A549 (cell line): ENCODE measurements at regions of chr20 and their contacts with region 1.

Region 1: GRCh38 chr20:49888345-49888966 is 26.9 kb downstream of the SPATA2 start:
- DNase-seq: peak; percentile 66 to 77
- ATAC-seq: peak; percentile 56 to 81; a peak in 5 of 6 replicates
- H3K4me3 ChIP-seq: no peak overlapping the region
- H3K27ac ChIP-seq: peak overlapping the region in 1 of 2 experiments; percentile 71; a peak in 3 of 6 replicates
- H3K4me1 ChIP-seq: peaks cover 18% of the 10 kb centered on the region
- CTCF ChIP-seq: peak; percentile 93
- EP300 ChIP-seq: no peak
- POLR2A ChIP-seq: no peak
- RAD21 ChIP-seq: peak; percentile 87 to 89

Region 2: GRCh38 chr20:49853640-49854039 is 34.8 kb before region 1 on chr20:
- CTCF ChIA-PET with region 1: interaction called, 19 read pairs
- POLR2A ChIA-PET with region 1: no interaction called
- DNase-seq: peak in 1 of 2 experiments; percentile 66
- ATAC-seq: peak; percentile 67 to 81; a peak in 5 of 6 replicates
- H3K4me3 ChIP-seq: no peak overlapping the region
- H3K27ac ChIP-seq: peak overlapping the region; percentile 9 to 65; a peak in 4 of 6 replicates
- H3K4me1 ChIP-seq: peaks cover 26% of the 10 kb centered on the region
- CTCF ChIP-seq: no peak
- EP300 ChIP-seq: no peak
- POLR2A ChIP-seq: no peak
- RAD21 ChIP-seq: no peak

Region 3: DNA sequence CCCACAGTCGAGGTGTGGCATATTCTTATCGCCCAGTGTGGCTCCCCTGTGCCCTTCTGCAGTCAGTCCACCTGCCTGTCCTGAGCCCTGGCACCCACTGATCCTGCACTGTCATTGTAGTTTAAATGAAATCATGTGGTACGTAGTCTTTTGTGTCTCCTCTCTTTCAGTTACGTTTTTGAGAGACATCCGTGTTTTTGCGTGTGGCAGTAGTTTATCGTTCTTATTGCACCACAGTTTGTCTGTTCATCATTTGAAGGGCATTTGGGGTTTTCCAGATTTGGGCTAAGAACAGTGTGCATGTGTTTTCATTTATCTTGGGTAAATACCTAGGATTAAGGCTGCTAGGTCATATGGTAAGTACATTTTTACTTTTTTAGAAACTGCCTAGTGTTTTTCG is 22.4 kb before region 1 on chr20:
- CTCF ChIA-PET with region 1: interaction called, 22 read pairs
- POLR2A ChIA-PET with region 1: no interaction called
- DNase-seq: no peak
- ATAC-seq: no peak
- H3K4me3 ChIP-seq: no peak overlapping the region
- H3K27ac ChIP-seq: no peak overlapping the region
- H3K4me1 ChIP-seq: no peaks in the 10 kb centered on the region; the same call in 2 of the 3 replicates
- CTCF ChIP-seq: no peak
- EP300 ChIP-seq: no peak
- POLR2A ChIP-seq: no peak
- RAD21 ChIP-seq: no peak

Region 4: DNA sequence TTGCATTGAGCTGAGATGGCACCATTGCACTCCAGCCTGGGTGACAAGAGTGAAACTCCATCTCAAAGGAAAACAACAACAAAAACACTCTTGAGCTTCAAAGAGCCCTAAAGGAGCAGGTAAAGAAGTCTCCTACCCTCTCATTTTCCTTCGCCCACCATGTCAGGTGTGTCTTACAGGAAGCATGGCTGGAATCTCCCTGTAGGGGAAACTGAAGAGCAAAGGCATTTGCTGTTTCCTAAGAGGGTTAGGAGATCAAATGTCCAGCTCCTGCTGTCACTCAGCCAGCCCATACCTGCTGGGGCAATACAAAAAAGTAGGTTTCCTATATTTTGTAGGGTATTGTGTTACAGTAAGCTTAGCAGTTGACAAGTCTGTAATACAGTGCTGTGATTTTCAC is 16.4 kb before region 1 on chr20:
- CTCF ChIA-PET with region 1: interaction called, 29 read pairs
- POLR2A ChIA-PET with region 1: no interaction called
- DNase-seq: no peak
- ATAC-seq: no peak
- H3K4me3 ChIP-seq: no peak overlapping the region
- H3K27ac ChIP-seq: no peak overlapping the region
- H3K4me1 ChIP-seq: peaks cover 3% of the 10 kb centered on the region; the same call in 2 of the 3 replicates
- CTCF ChIP-seq: no peak
- EP300 ChIP-seq: no peak
- POLR2A ChIP-seq: no peak
- RAD21 ChIP-seq: no peak

Region 5: GRCh38 chr20:49877386-49877921 is 11.0 kb before region 1 on chr20:
- CTCF ChIA-PET with region 1: interaction called, 29 read pairs
- POLR2A ChIA-PET with region 1: no interaction called
- DNase-seq: no peak
- ATAC-seq: no peak
- H3K4me3 ChIP-seq: no peak overlapping the region
- H3K27ac ChIP-seq: no peak overlapping the region
- H3K4me1 ChIP-seq: peaks cover 6% of the 10 kb centered on the region
- CTCF ChIP-seq: no peak
- EP300 ChIP-seq: no peak
- POLR2A ChIP-seq: no peak
- RAD21 ChIP-seq: no peak

Region 6: DNA sequence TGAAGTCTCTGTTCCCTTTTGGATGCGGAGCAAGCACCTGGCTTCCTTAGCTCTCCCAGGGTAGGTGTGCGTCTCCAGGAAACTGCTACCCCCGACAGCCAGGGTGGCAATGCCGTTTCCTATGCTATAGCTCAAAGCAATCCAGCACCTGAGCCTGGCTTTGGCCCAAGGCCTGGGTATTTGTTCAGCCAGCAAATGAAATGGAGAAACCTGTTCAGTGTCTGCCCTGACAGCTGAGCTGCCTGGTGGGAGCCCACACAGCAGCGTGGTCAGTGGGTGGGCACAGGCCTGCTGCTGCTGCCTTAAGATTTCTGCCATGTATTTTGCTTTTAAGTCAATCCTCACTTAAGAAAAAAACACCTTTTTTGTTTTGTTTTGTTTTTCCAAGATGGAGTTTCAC is 13.1 kb after region 1 on chr20:
- CTCF ChIA-PET with region 1: interaction called, 90 read pairs
- POLR2A ChIA-PET with region 1: interaction called, 3 read pairs
- DNase-seq: no peak
- ATAC-seq: no peak
- H3K4me3 ChIP-seq: no peak overlapping the region
- H3K27ac ChIP-seq: no peak overlapping the region
- H3K4me1 ChIP-seq: peaks cover 14% of the 10 kb centered on the region; the same call in 2 of the 3 replicates
- CTCF ChIP-seq: no peak
- EP300 ChIP-seq: no peak
- POLR2A ChIP-seq: no peak
- RAD21 ChIP-seq: no peak

Region 7: DNA sequence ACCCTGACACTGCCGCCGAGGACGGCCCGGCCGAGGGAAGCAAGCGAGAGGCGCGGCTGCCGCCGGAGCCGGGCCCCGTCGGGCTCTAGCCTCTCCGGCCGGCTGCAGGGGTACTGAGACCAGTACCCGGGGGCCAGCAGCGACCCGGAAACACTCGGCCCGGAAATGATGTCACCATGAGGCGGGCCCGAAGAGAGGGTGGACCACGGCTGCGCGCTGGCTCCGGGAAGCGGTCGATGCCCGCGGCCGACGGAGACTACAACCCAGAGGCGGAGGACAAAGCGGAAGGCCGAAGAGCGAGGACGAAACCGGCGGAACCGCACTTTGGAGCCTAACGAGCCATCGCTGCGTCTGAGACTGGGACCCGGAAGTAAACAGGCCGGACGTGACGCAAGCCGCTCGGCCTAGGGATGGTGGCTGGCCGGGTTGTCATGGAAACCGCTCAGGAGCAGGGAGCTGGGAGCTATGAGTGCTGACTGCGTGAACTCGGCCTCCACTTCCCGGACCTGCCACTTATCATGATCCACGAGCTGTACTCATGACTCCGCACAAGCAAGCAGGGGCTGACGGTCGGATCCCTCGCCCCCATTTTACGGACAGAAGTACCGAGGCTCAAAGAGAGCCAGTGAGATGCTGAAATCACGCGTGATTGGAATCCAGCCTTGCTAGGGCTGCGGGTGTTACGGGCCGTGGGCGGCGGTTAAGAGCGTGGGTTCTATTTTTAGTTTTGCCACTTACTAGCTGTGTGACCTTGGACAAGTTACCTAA is 27.1 kb after region 1 on chr20 and contains the start of gene SPATA2:
- CTCF ChIA-PET with region 1: interaction called, 37 read pairs
- POLR2A ChIA-PET with region 1: interaction called, 3 read pairs
- DNase-seq: peak; percentile 89 to 97
- ATAC-seq: peak; percentile 90 to 94
- H3K4me3 ChIP-seq: peak within 1 kb of the TSS; percentile 93
- H3K27ac ChIP-seq: peak within 1 kb of the TSS; percentile 99
- H3K4me1 ChIP-seq: peaks cover 23% of the 10 kb centered on the region
- CTCF ChIP-seq: no peak
- EP300 ChIP-seq: no peak
- POLR2A ChIP-seq: peak; percentile 45
- RAD21 ChIP-seq: no peak
- polyA plus RNA-seq, gene SPATA2: 4.9 and 5.1 TPM in 2 replicates

Region 8: DNA sequence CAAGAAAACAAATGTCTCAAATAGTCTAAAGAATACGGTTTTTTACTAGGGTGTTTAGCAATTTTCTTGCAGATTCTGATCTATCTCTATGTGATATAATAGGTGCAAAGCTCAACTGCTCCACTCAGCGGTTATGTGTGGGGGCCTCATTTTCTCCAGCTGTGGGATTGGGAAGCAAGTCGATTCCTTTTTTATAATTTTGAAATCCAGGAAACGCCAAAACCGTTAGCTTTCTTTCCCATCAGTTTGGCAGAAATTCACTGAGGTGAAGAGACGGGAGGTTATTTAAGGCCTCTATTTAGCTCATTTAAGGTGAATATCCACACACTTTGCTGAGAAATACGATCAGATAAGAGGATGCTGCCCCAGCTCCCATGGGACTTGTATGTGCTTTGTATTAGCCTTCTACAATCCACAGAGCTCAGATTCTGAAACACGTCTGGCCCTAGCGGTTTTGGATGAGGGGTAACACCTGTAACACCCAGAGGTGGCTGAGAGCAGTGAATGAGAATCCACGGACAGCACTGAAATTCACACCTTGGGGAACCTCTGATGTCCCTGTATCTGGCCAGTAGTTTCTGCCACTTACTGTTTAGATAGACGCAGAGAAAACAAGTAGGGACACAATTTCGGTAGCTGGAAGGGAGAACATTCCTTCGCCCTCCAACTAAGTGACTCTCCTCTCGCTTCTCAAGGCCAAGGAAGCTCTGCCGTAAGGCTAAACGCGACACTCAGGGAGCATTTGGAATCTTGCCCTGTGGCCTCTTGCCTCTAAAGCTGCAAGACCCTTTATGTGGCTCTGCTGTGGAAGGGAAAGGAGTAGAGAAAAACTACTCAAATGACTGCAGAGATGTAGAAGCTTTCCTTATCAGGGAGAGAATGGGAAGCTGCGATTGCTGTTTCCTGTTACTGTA is 899.9 kb after region 1 on chr20:
- CTCF ChIA-PET with region 1: no interaction called
- POLR2A ChIA-PET with region 1: no interaction called
- DNase-seq: peak; percentile 88 to 90
- ATAC-seq: peak; percentile 66 to 73
- H3K4me3 ChIP-seq: no peak overlapping the region
- H3K27ac ChIP-seq: peak overlapping the region; percentile 90
- H3K4me1 ChIP-seq: peaks cover 29% of the 10 kb centered on the region
- CTCF ChIP-seq: peak; percentile 97
- EP300 ChIP-seq: no peak
- POLR2A ChIP-seq: no peak
- RAD21 ChIP-seq: peak; percentile 99